ENCODE measurements at regions of chr7 and their contacts with region 1.

Region 1: GRCh38 chr7:23700059-23700458 is 10.0 kb upstream of the STK31 start:
- DNase-seq: no peak
- H3K4me3 ChIP-seq: no peak overlapping the region
- H3K27ac ChIP-seq: no peak overlapping the region
- H3K4me1 ChIP-seq: no peaks in the 10 kb centered on the region
- H3K27me3 ChIP-seq: no peaks in the 10 kb centered on the region
- CTCF ChIP-seq: no peak
- EP300 ChIP-seq: no peak
- POLR2A ChIP-seq: no peak

Region 2: GRCh38 chr7:21782996-21783395 is 1917.1 kb before region 1 on chr7:
- in situ Hi-C with region 1: no loop called
- intact Hi-C with region 1: no loop called
- DNase-seq: no peak
- H3K4me3 ChIP-seq: no peak overlapping the region
- H3K27ac ChIP-seq: no peak overlapping the region
- H3K4me1 ChIP-seq: no peaks in the 10 kb centered on the region
- H3K27me3 ChIP-seq: no peaks in the 10 kb centered on the region
- CTCF ChIP-seq: no peak
- EP300 ChIP-seq: no peak
- POLR2A ChIP-seq: no peak

Region 3: DNA sequence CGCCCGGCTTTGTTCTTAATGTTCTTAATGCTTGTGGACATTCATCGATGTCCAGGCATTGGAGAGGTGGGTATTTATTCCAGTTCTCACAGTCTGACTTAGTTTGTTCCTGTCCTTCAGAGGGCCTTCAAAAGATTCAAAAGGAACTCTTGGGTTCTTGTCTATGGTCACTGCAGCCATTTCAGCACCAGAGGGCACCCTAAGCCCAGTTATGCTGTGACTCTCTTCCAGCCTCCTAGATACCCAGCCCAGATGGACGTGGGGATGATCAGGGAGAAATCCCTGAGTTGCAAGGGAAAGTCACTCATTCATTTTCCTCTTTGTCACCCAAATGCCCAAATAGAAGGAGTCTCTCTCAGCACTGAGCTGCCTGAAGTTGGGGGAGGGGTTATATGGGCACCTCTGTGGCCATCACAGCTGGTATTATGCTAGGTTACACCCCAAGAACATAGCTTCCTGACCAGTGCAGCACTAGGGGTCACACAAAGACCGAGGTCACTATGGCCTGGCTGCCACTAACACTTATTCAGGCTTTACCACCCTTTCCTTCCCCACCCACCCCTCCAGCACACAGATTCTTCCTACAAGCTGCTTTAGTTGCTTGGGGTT is 129.4 kb before region 1 on chr7:
- in situ Hi-C with region 1: loop called in 2 of 4 experiments (anchors 5 to 10 kb)
- intact Hi-C with region 1: no loop called
- DNase-seq: peak; percentile 82
- H3K4me3 ChIP-seq: no peak overlapping the region
- H3K27ac ChIP-seq: no peak overlapping the region
- H3K4me1 ChIP-seq: no peaks in the 10 kb centered on the region
- H3K27me3 ChIP-seq: no peaks in the 10 kb centered on the region
- CTCF ChIP-seq: peak; percentile 72 to 83 (median 76)
- EP300 ChIP-seq: no peak
- POLR2A ChIP-seq: no peak

Region 4: GRCh38 chr7:23679898-23680413 is 20.1 kb before region 1 on chr7 and contains the start of gene FAM221A:
- in situ Hi-C with region 1: no loop called
- intact Hi-C with region 1: no loop called
- DNase-seq: peak; percentile 94
- H3K4me3 ChIP-seq: peak within 1 kb of the TSS; percentile 60 to 96 (median 86)
- H3K27ac ChIP-seq: peak within 1 kb of the TSS; percentile 87 to 90 (median 89)
- H3K4me1 ChIP-seq: peaks cover 0 to 25% (median 4%) of the 10 kb centered on the region in 4 donors
- H3K27me3 ChIP-seq: no peaks in the 10 kb centered on the region
- CTCF ChIP-seq: peak; percentile 70 to 91 (median 84)
- EP300 ChIP-seq: no peak
- POLR2A ChIP-seq: no peak
- total RNA-seq, gene FAM221A: 7.5 to 18.4 (median 13.1) TPM

Region 5: GRCh38 chr7:24685708-24686107 is 985.6 kb after region 1 on chr7:
- in situ Hi-C with region 1: no loop called
- intact Hi-C with region 1: no loop called
- DNase-seq: no peak
- H3K4me3 ChIP-seq: no peak overlapping the region
- H3K27ac ChIP-seq: no peak overlapping the region
- H3K4me1 ChIP-seq: no peaks in the 10 kb centered on the region
- H3K27me3 ChIP-seq: no peaks in the 10 kb centered on the region
- CTCF ChIP-seq: no peak
- EP300 ChIP-seq: no peak
- POLR2A ChIP-seq: no peak

Measured in transverse colon (tissue), 4 donors.